Right ventricle myocardium inferior (tissue), 1 donor: ENCODE measurements at regions of chr2 and their contacts with region 1.

Region 1: DNA sequence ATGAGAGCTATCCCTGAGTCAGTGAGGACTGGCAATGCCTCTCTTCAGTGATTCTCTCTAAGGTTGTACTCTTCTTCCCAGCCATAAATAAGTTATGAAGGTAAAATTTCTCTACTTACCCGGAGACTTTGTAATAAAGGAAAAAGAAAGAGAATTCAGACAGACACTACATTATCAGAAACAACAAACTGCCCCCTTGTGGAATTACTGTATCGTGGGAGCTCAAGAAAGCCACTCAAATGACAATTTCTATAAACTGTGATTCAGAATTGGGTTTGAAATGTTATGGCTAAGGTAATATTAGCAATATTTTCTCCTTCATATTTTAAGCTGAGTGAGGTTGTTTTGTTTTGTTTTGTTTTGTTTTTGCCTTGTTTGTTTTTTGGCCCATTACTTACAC is 155.8 kb upstream of the TANK start:
- DNase-seq: no peak
- ATAC-seq: no peak

Region 2: GRCh38 chr2:161063157-161063954 is 59.0 kb after region 1 on chr2:
- intact Hi-C with region 1: loop called (anchors 10 kb)
- DNase-seq: peak; percentile 70
- ATAC-seq: peak; percentile 83